GM10248 (cell line): ENCODE measurements at regions of chr6 and their contacts with region 1.

Region 1: DNA sequence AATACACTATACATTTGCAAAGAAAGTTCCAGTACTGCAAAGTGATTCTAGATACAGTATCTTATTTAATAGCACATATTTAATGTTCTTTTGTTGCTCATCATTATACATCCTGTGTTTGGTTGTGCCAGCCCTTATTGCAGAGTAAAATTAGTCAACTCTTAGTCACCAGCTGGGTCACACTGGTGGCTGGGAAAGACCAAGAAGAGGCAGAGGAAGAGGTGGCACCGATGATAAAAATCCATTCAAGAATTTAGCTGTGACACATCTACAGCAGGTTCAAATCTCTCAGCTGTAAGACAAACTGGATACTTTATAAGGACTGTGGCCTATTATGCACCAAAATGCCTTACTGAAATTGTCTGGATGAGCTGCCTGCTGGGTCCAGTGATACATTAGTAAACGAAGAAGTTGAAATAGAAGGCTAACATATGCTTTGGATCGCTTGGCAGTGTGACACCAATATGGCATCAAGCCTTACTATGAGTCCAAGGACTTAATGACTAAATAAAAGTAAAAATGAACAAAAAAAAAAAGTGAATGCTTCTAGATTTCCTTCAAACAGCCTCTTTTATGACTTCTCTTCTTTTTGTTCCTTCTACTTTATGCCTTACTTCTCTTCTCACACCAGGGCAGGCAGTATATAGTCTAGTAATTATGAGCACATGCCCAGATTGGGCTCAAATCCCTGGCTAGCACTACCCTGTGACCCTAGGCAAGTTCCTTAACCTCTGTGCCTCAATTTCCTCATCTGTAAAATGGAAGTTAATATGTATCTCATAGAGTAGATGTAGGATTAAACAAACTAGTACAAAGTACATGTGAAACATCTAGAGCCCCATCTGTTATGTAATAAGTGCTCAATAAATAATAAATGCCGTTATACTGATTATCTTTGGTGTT is 29.4 kb upstream of the RNF8 start:
- DNase-seq: no peak
- CTCF ChIP-seq: no peak

Region 2: DNA sequence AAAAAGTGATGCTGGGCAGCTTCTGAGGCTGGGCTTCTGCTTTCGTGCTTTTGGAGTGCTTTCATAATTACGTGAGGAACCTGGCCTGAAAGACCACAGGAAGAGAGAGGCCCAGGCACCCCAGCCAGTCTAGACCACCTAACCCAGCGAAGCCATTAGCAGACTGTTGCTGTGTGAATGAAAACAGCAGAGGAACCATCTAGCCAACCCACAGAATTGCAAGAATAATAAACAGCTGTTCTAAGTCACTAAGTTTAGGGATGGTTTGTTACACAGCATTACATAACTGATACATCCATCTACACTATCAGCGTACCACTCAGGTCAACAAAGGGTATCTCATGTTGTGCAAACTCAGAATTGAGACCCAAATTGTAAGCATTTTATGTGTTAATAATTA is 284.4 kb before region 1 on chr6:
- CTCF ChIA-PET with region 1: no interaction called
- POLR2A ChIA-PET with region 1: no interaction called
- DNase-seq: no peak
- CTCF ChIP-seq: no peak

Region 3: GRCh38 chr6:37339741-37340638 is 15.6 kb after region 1 on chr6:
- CTCF ChIA-PET with region 1: interaction called, 11 read pairs
- POLR2A ChIA-PET with region 1: no interaction called
- DNase-seq: no peak
- CTCF ChIP-seq: no peak

Region 4: GRCh38 chr6:37365762-37366161 is 41.4 kb after region 1 on chr6:
- CTCF ChIA-PET with region 1: interaction called, 16 read pairs
- POLR2A ChIA-PET with region 1: no interaction called
- DNase-seq: no peak
- CTCF ChIP-seq: peak; percentile 16